ENCODE measurements at regions of chr4 and their contacts with region 1.

Region 1: GRCh38 chr4:72326692-72327632 is 242.1 kb downstream of the ADAMTS3 start:
- DNase-seq: no peak
- ATAC-seq: peak in 3 of 4 donors; percentile 46 to 62 (median 54)
- H3K4me3 ChIP-seq: no peak overlapping the region
- H3K27ac ChIP-seq: no peak overlapping the region
- H3K4me1 ChIP-seq: no peaks in the 10 kb centered on the region
- H3K27me3 ChIP-seq: no peaks in the 10 kb centered on the region
- CTCF ChIP-seq: peak in 2 of 4 donors; percentile 24 to 30

Region 2: GRCh38 chr4:72473434-72473900 is 146.5 kb after region 1 on chr4:
- intact Hi-C with region 1: loop called in 1 of 3 experiments (anchors 5 kb)
- DNase-seq: no peak
- ATAC-seq: no peak
- H3K4me3 ChIP-seq: no peak overlapping the region
- H3K27ac ChIP-seq: no peak overlapping the region
- H3K4me1 ChIP-seq: no peaks in the 10 kb centered on the region
- H3K27me3 ChIP-seq: no peaks in the 10 kb centered on the region
- CTCF ChIP-seq: no peak

Measured in pancreas (tissue), 10 donors.